SK-MEL-5 (cell line): ENCODE measurements at regions of chr6 and their contacts with region 1.

Region 1: GRCh38 chr6:1242446-1242845 is 69.5 kb upstream of the FOXQ1 start:
- DNase-seq: no peak

Region 2: DNA sequence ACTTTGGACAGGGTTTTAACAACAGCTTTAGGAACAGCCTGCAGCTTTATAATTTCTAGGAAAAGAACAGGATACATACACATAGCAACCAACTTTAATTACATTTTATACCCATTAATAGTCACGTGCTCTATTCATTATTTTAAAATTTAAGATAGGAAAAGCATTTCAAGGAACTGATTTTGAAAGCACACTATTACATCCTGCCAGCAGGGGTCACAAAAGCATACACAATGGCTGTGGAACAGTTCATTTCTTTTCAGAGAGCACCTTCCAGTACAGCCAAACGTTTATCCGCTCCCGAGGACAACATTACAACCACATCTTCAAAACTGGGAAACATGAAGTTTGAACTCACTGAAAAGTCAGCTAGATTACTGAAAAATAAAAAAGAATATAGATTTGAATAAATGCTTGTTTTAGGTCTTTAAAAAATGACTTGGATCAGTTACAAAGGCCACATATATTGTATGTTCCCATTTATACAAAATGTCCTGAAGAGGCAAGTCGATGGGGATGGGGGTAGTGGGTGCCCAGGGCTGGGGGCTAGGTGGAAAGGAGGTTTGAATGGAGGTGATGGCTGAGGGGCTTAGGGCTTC is 444.9 kb before region 1 on chr6:
- in situ Hi-C with region 1: no loop called
- DNase-seq: peak; percentile 80

Region 3: DNA sequence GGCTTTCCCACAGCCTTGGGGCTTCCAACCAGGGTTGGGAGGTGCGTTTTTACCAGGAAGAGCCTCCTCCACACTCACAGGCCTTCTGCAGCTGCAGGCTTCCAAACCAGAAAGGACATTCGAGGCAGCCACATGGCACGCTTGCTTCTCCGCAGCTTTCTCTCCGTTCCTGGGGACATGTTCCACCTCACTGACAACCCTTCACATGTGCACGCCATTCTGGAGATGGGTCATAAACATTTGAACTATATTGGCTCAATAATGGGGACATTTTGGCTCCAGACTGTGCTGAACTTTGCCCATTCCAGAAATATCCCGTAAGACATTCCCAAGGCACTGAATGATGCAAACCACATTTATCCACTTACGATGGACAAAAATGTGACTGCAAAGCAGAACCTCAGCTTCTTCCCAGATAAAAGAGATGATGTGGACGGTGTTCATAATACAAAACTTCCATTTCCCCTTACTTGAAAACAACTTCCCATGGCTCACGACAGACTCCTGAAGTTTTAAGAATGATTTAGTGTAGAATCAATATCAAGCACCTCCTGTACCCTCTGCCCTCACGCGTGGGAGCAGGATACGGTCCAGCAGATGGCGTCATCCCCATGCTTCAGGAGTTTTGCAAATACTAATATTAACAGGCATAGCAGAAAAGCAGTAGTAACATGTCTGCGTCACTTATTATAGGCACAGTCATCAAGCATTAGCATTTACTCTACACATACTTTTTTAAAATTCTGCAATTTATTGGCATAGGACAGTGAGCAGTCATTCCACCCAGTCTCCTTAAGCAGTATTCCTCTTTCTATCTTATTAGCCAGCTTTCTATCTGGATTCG is 121.5 kb after region 1 on chr6:
- in situ Hi-C with region 1: loop called (anchors 25 kb)
- DNase-seq: peak; percentile 52